ENCODE measurements at regions of chr14 and their contacts with region 1.

Region 1: GRCh38 chr14:70907176-70907995 is at the start of gene PCNX1:
- DNase-seq: peak; percentile 84
- H3K4me3 ChIP-seq: peak within 1 kb of the TSS; percentile 81 to 85
- H3K27ac ChIP-seq: peak within 1 kb of the TSS; percentile 92 to 93
- H3K4me1 ChIP-seq: no peaks in the 10 kb centered on the region
- H3K27me3 ChIP-seq: no peaks in the 10 kb centered on the region
- CTCF ChIP-seq: peak; percentile 65 to 92 (median 81)
- POLR2A ChIP-seq: peak; percentile 32
- total RNA-seq, gene PCNX1: 24.5 to 66.5 TPM

Region 2: GRCh38 chr14:70972107-70972976 is 65.0 kb after region 1 on chr14:
- intact Hi-C with region 1: loop called (anchors 5 kb)
- DNase-seq: peak; percentile 89
- H3K4me3 ChIP-seq: no peak overlapping the region
- H3K27ac ChIP-seq: no peak overlapping the region
- H3K4me1 ChIP-seq: no peaks in the 10 kb centered on the region
- H3K27me3 ChIP-seq: no peaks in the 10 kb centered on the region
- CTCF ChIP-seq: peak; percentile 80 to 95 (median 88)
- POLR2A ChIP-seq: no peak